MCF 10A (cell line): ENCODE measurements at regions of chr5 and their contacts with region 1.

Region 1: GRCh38 chr5:181191529-181192394 is 13.2 kb downstream of the TRIM7 start:
- DNase-seq: peak; percentile 97
- H3K4me3 Mint-ChIP-seq: peak overlapping the region; percentile 96
- H3K27ac Mint-ChIP-seq: peak overlapping the region; percentile 88
- H3K4me1 Mint-ChIP-seq: peaks cover 14% of the 10 kb centered on the region
- H3K27me3 Mint-ChIP-seq: no peaks in the 10 kb centered on the region
- CTCF ChIP-seq: no peak

Region 2: GRCh38 chr5:180784497-180785097 is 407.2 kb before region 1 on chr5:
- CTCF ChIA-PET with region 1: interaction called, 3 read pairs
- POLR2A ChIA-PET with region 1: no interaction called
- intact Hi-C with region 1: loop called (anchors 2 kb)
- DNase-seq: peak; percentile 88
- H3K4me3 Mint-ChIP-seq: no peak overlapping the region
- H3K27ac Mint-ChIP-seq: no peak overlapping the region
- H3K4me1 Mint-ChIP-seq: peaks cover 13% of the 10 kb centered on the region
- H3K27me3 Mint-ChIP-seq: no peaks in the 10 kb centered on the region
- CTCF ChIP-seq: peak; percentile 90

Region 3: DNA sequence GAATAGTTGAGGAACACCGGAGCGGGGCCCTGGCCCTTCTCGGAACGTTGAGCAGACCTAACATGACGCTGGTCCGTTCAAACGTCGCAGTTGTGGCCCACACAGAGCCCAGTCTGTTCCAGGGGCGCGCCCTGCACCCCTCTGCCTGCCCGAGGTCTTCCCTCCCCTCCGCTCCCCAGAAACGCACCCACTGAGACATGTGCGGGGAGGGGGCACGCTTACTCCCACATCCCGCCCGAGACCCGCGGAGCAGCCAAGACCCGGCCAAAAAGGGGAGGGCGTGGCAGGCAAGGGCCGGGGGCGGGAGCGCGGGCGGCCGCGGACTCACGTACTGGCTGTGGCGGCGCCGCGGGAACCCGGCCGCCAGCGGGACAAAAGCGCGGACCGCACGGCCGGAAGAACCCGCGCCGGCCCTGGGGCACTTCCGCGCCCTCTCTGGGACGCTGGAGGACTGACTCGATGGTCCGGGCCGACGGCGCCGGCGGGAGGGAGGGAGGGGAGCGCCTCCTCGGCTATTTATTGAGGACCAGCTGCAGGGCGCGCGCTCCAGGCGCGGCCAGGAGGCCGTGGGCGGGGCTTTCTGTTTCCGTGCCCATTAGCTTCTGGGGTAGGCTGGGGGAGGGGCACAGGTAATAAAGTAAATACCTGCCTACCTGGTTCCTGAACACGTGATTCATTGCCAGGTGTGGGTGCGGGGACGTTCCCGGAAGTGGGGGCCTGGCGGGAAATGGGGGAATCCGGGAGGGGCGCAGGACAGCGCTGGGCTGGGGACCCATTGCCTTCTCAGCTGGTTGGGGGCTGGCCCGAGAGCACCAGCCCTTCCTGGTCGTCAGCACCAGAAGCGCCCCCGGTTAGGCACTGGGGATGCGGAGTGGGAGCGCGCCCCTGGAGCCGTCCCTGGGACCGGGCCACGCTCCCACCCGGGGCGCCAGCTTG is 330.6 kb before region 1 on chr5 and contains the start of gene ZFP62:
- CTCF ChIA-PET with region 1: interaction called, 3 read pairs
- POLR2A ChIA-PET with region 1: interaction called, 19 read pairs
- intact Hi-C with region 1: loop called (anchors 10 kb)
- DNase-seq: peak; percentile 95
- H3K4me3 Mint-ChIP-seq: peak within 1 kb of the TSS; percentile 84
- H3K27ac Mint-ChIP-seq: peak within 1 kb of the TSS; percentile 89
- H3K4me1 Mint-ChIP-seq: peaks cover 21% of the 10 kb centered on the region
- H3K27me3 Mint-ChIP-seq: no peaks in the 10 kb centered on the region
- CTCF ChIP-seq: no peak
- total RNA-seq, gene ZFP62: 31.2 and 36.9 TPM in 2 replicates

Region 4: GRCh38 chr5:181173420-181174342 is 18.1 kb before region 1 on chr5:
- CTCF ChIA-PET with region 1: interaction called, 10 read pairs
- POLR2A ChIA-PET with region 1: interaction called, 34 read pairs
- intact Hi-C with region 1: loop called (anchors 2 kb)
- DNase-seq: peak; percentile 87
- H3K4me3 Mint-ChIP-seq: peak overlapping the region; percentile 84
- H3K27ac Mint-ChIP-seq: peak overlapping the region; percentile 46
- H3K4me1 Mint-ChIP-seq: peaks cover 32% of the 10 kb centered on the region
- H3K27me3 Mint-ChIP-seq: no peaks in the 10 kb centered on the region
- CTCF ChIP-seq: peak; percentile 13

Region 5: GRCh38 chr5:181217111-181217802 is 25.5 kb after region 1 on chr5:
- CTCF ChIA-PET with region 1: interaction called, 5 read pairs
- POLR2A ChIA-PET with region 1: interaction called, 171 read pairs
- intact Hi-C with region 1: loop called (anchors 1 kb)
- DNase-seq: peak; percentile 80
- H3K4me3 Mint-ChIP-seq: peak overlapping the region; percentile 72
- H3K27ac Mint-ChIP-seq: peak overlapping the region; percentile 65
- H3K4me1 Mint-ChIP-seq: peaks cover 31% of the 10 kb centered on the region
- H3K27me3 Mint-ChIP-seq: no peaks in the 10 kb centered on the region
- CTCF ChIP-seq: no peak

Region 6: DNA sequence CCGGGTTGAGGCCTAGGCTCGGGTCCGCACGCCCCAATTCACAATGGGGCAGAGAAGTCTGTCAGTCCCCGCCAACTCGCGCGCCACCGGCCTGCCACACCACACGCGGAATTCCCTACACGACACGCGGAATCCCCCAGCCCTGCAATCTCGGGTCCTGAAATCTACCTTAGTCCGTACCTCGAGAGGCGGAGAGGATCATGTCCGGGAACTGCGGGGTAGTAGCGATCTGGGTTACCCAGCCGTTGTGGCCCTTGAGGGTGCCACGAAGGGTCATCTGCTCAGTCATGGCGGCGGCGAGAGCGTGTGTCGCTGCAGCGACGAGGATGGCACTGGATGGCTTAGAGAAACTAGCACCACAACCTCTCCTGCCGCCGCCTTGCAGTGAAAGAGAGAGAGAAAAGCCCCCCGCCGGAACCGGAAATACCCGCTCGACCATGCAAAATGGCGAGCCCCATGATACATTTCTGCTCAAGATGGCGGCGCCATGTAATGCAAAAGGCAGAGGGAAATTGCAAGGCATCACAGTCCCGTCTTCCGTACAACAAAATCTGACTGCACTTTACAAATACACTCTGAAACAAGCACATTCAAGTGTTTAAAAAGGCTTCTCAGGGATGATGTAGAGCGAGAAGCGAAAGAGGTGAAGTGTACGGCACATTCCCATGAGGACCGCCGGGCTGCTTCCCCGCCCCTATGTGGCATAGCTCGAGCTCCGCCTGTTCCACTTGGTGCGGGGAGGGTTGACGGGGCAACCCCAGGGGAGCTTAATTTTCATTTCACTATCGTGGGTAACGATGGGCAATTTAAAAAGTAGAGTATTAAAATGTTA is 52.0 kb after region 1 on chr5 and contains the start of gene RACK1:
- CTCF ChIA-PET with region 1: interaction called, 3 read pairs
- POLR2A ChIA-PET with region 1: interaction called, 167 read pairs
- intact Hi-C with region 1: loop called (anchors 1 kb)
- DNase-seq: peak; percentile 96
- H3K4me3 Mint-ChIP-seq: peak within 1 kb of the TSS; percentile 99
- H3K27ac Mint-ChIP-seq: peak within 1 kb of the TSS; percentile 99
- H3K4me1 Mint-ChIP-seq: peaks cover 48% of the 10 kb centered on the region
- H3K27me3 Mint-ChIP-seq: no peaks in the 10 kb centered on the region
- CTCF ChIP-seq: no peak
- total RNA-seq, gene RACK1: 2,995 and 4,050 TPM in 2 replicates